ENCODE measurements at regions of chr11 and their contacts with region 1.

Region 1: DNA sequence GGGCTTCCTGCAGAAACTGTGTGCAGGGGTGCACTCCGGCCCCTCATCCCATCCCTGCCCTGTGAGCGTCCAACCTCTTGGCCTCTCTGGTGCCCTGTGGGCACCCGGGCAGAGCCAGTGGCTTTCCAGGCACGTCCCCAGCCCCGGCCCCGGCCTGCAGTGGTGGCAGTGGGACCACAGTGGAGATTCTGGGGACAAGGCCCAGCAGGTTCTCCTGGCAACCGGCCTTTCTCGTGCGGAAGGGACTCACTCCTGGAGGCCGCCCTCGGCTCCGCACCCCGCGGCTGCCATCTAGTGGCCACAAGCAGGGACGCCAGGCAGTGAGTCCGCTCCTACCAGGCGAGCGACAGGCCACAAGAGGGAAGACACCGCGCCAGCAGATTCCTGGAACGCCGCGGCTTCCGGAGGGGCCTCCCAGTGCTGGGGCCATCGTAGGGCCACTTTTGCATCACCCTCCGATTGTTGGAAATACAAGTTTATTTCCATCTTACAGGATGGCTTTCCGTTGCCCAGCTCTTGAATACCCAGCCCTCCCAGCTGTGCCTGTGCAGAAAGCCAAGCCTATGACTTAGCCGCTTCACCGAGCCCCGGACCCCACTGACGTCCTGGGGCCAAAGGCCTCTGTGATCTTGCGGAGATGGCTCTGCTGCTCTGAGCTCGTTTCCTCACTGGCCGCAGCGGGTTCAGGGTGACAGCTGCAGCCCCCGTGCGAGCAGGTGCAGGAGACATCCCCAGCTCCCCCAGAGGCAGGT is 357.3 kb downstream of the CTTN start:
- DNase-seq: no peak
- H3K4me3 ChIP-seq: no peak overlapping the region
- H3K27ac ChIP-seq: no peak overlapping the region
- H3K4me1 ChIP-seq: peaks cover 0 to 10% (median 9%) of the 10 kb centered on the region in 4 donors
- H3K27me3 ChIP-seq: peaks cover 0 to 12% (median 0%) of the 10 kb centered on the region in 4 donors
- CTCF ChIP-seq: peak in 2 of 3 experiments; percentile 89 to 93
- EP300 ChIP-seq: no peak
- POLR2A ChIP-seq: no peak

Region 2: GRCh38 chr11:70467201-70468085 is 288.1 kb before region 1 on chr11:
- intact Hi-C with region 1: loop called (anchors 1 kb)
- DNase-seq: no peak
- H3K4me3 ChIP-seq: no peak overlapping the region
- H3K27ac ChIP-seq: no peak overlapping the region
- H3K4me1 ChIP-seq: peaks cover 0 to 7% (median 2%) of the 10 kb centered on the region in 4 donors
- H3K27me3 ChIP-seq: peaks cover 0 to 27% (median 0%) of the 10 kb centered on the region in 4 donors
- CTCF ChIP-seq: peak; percentile 81 to 86 (median 82)
- EP300 ChIP-seq: no peak
- POLR2A ChIP-seq: no peak

Region 3: GRCh38 chr11:70568038-70568813 is 187.4 kb before region 1 on chr11:
- intact Hi-C with region 1: no loop called
- DNase-seq: no peak
- H3K4me3 ChIP-seq: peak overlapping the region; percentile 48 to 59 (median 52)
- H3K27ac ChIP-seq: peak overlapping the region; percentile 40 to 76 (median 64)
- H3K4me1 ChIP-seq: peaks cover 17 to 21% (median 20%) of the 10 kb centered on the region in 4 donors
- H3K27me3 ChIP-seq: no peaks in the 10 kb centered on the region
- CTCF ChIP-seq: peak in 2 of 3 experiments; percentile 12 to 56
- EP300 ChIP-seq: no peak
- POLR2A ChIP-seq: no peak

Region 4: GRCh38 chr11:70656252-70656651 is 99.3 kb before region 1 on chr11:
- intact Hi-C with region 1: no loop called
- DNase-seq: no peak
- H3K4me3 ChIP-seq: no peak overlapping the region
- H3K27ac ChIP-seq: no peak overlapping the region
- H3K4me1 ChIP-seq: peaks cover 0 to under 1% (median 0%) of the 10 kb centered on the region in 4 donors
- H3K27me3 ChIP-seq: peaks cover 0 to 9% (median 3%) of the 10 kb centered on the region in 4 donors
- CTCF ChIP-seq: no peak
- EP300 ChIP-seq: no peak
- POLR2A ChIP-seq: no peak

Measured in esophagus muscularis mucosa (tissue), 4 donors.